Heart left ventricle (tissue), 16 donors: ENCODE measurements at regions of chrX and their contacts with region 1.

Region 1: GRCh38 chrX:7132335-7133049 is 15.0 kb upstream of the STS start:
- DNase-seq: peak in 1 of 5 donors; percentile 52
- ATAC-seq: peak; percentile 42 to 82 (median 60)
- H3K4me3 ChIP-seq: no peak overlapping the region
- H3K27ac ChIP-seq: peak overlapping the region; percentile 16 to 73 (median 46)
- H3K4me1 ChIP-seq: peaks cover 0 to 30% (median 15%) of the 10 kb centered on the region in 12 donors
- H3K27me3 ChIP-seq: no peaks in the 10 kb centered on the region
- CTCF ChIP-seq: peak in 10 of 12 donors; percentile 19 to 54 (median 36)
- POLR2A ChIP-seq: no peak

Region 2: GRCh38 chrX:7307720-7308119 is 175.2 kb after region 1 on chrX:
- intact Hi-C with region 1: no loop called
- DNase-seq: no peak
- ATAC-seq: no peak
- H3K4me3 ChIP-seq: no peak overlapping the region
- H3K27ac ChIP-seq: no peak overlapping the region
- H3K4me1 ChIP-seq: no peaks in the 10 kb centered on the region
- H3K27me3 ChIP-seq: no peaks in the 10 kb centered on the region
- CTCF ChIP-seq: no peak
- POLR2A ChIP-seq: no peak

Region 3: DNA sequence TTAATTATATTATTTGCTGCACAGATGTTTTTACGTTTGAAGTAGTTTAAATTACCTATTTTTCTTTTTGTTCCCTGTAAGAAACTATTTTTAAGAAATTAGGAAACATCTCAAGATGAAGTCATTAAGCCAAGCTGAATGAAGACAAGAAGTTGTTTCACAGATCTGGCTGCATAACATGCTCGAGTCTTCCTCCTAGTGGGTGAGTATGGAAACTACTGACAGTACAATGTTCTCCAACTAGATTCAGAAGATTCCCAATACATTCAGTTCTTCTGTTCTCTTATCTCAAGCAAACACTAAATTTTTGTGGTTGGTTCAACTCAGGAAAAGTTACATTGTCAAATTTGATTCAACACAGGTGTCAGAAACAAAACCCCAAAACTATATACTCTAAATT is 453.6 kb after region 1 on chrX:
- intact Hi-C with region 1: loop called in 1 of 10 experiments (anchors 10 kb)
- DNase-seq: no peak
- ATAC-seq: no peak
- H3K4me3 ChIP-seq: no peak overlapping the region
- H3K27ac ChIP-seq: no peak overlapping the region
- H3K4me1 ChIP-seq: no peaks in the 10 kb centered on the region
- H3K27me3 ChIP-seq: no peaks in the 10 kb centered on the region
- CTCF ChIP-seq: peak in 9 of 12 donors; percentile 11 to 47 (median 34)
- POLR2A ChIP-seq: no peak

Region 4: GRCh38 chrX:7925867-7926472 is 793.5 kb after region 1 on chrX:
- intact Hi-C with region 1: loop called in 1 of 10 experiments (anchors 10 kb)
- DNase-seq: peak in 4 of 5 donors; percentile 15 to 50 (median 38)
- ATAC-seq: peak in 2 of 4 donors; percentile 40 to 47
- H3K4me3 ChIP-seq: no peak overlapping the region
- H3K27ac ChIP-seq: peak overlapping the region in 1 of 12 donors; percentile 81
- H3K4me1 ChIP-seq: peaks cover 0 to 18% (median 3%) of the 10 kb centered on the region in 12 donors
- H3K27me3 ChIP-seq: peaks cover 0 to 3% (median 0%) of the 10 kb centered on the region in 9 donors
- CTCF ChIP-seq: peak; percentile 48 to 76 (median 65)
- POLR2A ChIP-seq: no peak